Adrenal gland (tissue), 19 donors: ENCODE measurements at regions of chr3 and their contacts with region 1.

Region 1: GRCh38 chr3:15405448-15406050 is 21.8 kb downstream of the METTL6 start:
- DNase-seq: peak in 1 of 7 donors; percentile 51
- H3K4me3 ChIP-seq: no peak overlapping the region
- H3K27ac ChIP-seq: no peak overlapping the region
- H3K4me1 ChIP-seq: peaks cover 0 to 7% of the 10 kb centered on the region in 2 donors
- H3K27me3 ChIP-seq: no peaks in the 10 kb centered on the region
- CTCF ChIP-seq: peak; percentile 59 to 75 (median 68)
- POLR2A ChIP-seq: no peak

Region 2: GRCh38 chr3:15108082-15108545 is 297.4 kb before region 1 on chr3:
- intact Hi-C with region 1: loop called in 1 of 2 experiments (anchors 10 kb)
- DNase-seq: peak; percentile 73 to 84 (median 78)
- H3K4me3 ChIP-seq: no peak overlapping the region
- H3K27ac ChIP-seq: no peak overlapping the region
- H3K4me1 ChIP-seq: peaks cover 0 to 8% of the 10 kb centered on the region in 2 donors
- H3K27me3 ChIP-seq: no peaks in the 10 kb centered on the region
- CTCF ChIP-seq: peak; percentile 73 to 90 (median 84)
- POLR2A ChIP-seq: no peak

Region 3: DNA sequence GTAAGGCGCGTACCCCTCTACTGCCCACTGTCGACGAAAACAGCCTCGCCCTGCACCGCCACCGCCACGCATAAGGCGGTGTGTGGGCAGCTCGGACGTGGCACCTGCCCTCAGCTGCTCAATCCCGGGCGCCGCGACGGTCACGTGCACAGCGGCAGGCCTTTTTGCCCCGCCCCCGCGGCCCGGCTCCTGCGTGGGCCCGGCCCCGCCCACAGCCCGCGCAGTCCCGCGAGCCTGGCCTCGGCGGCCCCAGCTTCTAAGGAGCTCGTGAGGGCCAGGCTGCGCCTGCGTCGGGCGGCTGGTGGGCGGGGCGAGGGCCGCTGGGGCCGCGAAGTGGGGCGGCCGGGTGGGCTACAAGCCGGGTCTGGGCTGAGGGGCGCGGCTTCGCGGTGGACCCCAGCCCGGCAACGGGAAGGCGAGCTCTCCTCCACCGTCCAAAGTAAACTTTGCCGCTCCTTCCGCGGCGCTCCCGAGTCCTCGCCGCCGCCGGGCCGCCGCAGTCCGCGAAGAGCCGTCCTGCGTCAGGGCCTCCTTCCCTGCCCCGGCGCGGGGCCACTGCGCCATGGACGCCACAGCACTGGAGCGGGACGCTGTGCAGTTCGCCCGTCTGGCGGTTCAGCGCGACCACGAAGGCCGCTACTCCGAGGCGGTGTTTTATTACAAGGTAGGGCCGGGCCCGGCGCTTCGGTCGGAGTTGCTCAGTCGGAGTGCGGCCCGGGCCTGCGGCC is 199.5 kb before region 1 on chr3 and contains the start of gene CAPN7:
- intact Hi-C with region 1: loop called (anchors 5 to 10 kb)
- DNase-seq: peak; percentile 95 to 98 (median 96)
- H3K4me3 ChIP-seq: peak within 1 kb of the TSS; percentile 54 to 100 (median 92)
- H3K27ac ChIP-seq: peak within 1 kb of the TSS; percentile 98 to 100 (median 99)
- H3K4me1 ChIP-seq: peaks cover 20 to 33% of the 10 kb centered on the region in 2 donors
- H3K27me3 ChIP-seq: no peaks in the 10 kb centered on the region
- CTCF ChIP-seq: peak in 3 of 6 experiments; percentile 38 to 61 (median 39)
- POLR2A ChIP-seq: peak; percentile 79 to 96
- total RNA-seq, gene CAPN7: 31.1 to 54.9 (median 42.4) TPM

Region 4: GRCh38 chr3:15256861-15257341 is 148.6 kb before region 1 on chr3:
- intact Hi-C with region 1: loop called in 1 of 2 experiments (anchors 5 kb)
- DNase-seq: no peak
- H3K4me3 ChIP-seq: no peak overlapping the region
- H3K27ac ChIP-seq: peak overlapping the region in 2 of 5 donors; percentile 67 to 72
- H3K4me1 ChIP-seq: peaks cover 0 to 13% of the 10 kb centered on the region in 2 donors
- H3K27me3 ChIP-seq: no peaks in the 10 kb centered on the region
- CTCF ChIP-seq: no peak
- POLR2A ChIP-seq: no peak